GM18951 (cell line): ENCODE measurements at regions of chr21 and their contacts with region 1.

Region 1: GRCh38 chr21:17371450-17371849 is 141.4 kb upstream of the CXADR start:
- POLR2A ChIP-seq: no peak

Region 2: GRCh38 chr21:17768840-17769446 is 397.5 kb after region 1 on chr21:
- in situ Hi-C with region 1: loop called (anchors 10 kb)
- POLR2A ChIP-seq: no peak